ENCODE measurements at regions of chrX and their contacts with region 1.

Region 1: GRCh38 chrX:111719426-111720210 is 38.6 kb downstream of the ALG13 start:
- DNase-seq: no peak
- H3K4me3 ChIP-seq: no peak overlapping the region
- H3K27ac ChIP-seq: no peak overlapping the region
- H3K4me1 ChIP-seq: no peaks in the 10 kb centered on the region
- H3K27me3 ChIP-seq: peaks cover 2% of the 10 kb centered on the region
- CTCF ChIP-seq: peak; percentile 30 to 43

Region 2: GRCh38 chrX:111695297-111695880 is 24.2 kb before region 1 on chrX:
- CTCF ChIA-PET with region 1: no interaction called
- dilution Hi-C with region 1: no loop called
- in situ Hi-C with region 1: no loop called
- intact Hi-C with region 1: no loop called
- DNase-seq: no peak
- H3K4me3 ChIP-seq: no peak overlapping the region
- H3K27ac ChIP-seq: no peak overlapping the region
- H3K4me1 ChIP-seq: no peaks in the 10 kb centered on the region
- H3K27me3 ChIP-seq: no peaks in the 10 kb centered on the region
- CTCF ChIP-seq: no peak

Region 3: DNA sequence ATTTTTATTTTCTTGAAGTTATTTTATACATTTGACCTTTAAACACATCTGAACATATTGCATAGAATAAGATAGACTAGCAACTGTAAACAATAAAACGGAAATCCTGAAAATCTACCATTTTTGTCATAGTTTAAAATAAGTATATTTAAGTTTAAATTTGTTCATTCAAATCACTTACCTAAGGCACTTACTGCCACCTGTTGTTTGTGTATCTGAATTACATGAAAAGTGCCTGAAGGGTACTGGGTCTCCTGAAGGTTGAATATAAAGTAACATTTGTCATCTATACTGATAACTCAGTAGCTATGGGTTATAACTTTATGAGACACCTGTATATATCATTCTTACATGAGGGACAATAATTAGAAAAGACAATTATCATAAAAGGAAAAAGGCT is 324.4 kb after region 1 on chrX:
- CTCF ChIA-PET with region 1: no interaction called
- dilution Hi-C with region 1: no loop called
- in situ Hi-C with region 1: no loop called
- intact Hi-C with region 1: loop called (anchors 5 kb)
- DNase-seq: no peak
- H3K4me3 ChIP-seq: no peak overlapping the region
- H3K27ac ChIP-seq: no peak overlapping the region
- H3K4me1 ChIP-seq: no peaks in the 10 kb centered on the region
- H3K27me3 ChIP-seq: peaks cover 6% of the 10 kb centered on the region
- CTCF ChIP-seq: peak; percentile 16 to 34